Posterior vena cava (tissue), 2 donors: ENCODE measurements at regions of chr17 and their contacts with region 1.

Region 1: DNA sequence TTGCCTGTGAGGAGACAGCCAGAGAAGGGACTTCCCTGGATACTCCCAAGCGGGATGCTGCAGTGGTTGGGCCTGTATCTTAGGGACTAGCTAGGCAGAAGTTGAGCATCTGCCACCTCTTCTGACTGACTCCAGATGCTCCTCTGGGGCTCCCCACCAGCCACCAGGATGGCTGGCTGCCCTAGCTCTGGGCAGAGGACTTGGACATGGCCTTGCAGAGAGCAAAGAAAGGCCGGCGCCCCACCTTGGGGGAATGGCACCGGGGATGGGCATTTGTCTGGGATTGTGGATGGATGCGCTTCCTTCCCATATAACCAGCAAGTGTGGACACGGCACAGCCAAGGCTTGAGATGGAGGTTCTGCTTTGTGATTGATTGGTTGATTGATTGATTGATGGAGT is 69.0 kb downstream of the OR1D5 start:
- DNase-seq: peak; percentile 32

Region 2: DNA sequence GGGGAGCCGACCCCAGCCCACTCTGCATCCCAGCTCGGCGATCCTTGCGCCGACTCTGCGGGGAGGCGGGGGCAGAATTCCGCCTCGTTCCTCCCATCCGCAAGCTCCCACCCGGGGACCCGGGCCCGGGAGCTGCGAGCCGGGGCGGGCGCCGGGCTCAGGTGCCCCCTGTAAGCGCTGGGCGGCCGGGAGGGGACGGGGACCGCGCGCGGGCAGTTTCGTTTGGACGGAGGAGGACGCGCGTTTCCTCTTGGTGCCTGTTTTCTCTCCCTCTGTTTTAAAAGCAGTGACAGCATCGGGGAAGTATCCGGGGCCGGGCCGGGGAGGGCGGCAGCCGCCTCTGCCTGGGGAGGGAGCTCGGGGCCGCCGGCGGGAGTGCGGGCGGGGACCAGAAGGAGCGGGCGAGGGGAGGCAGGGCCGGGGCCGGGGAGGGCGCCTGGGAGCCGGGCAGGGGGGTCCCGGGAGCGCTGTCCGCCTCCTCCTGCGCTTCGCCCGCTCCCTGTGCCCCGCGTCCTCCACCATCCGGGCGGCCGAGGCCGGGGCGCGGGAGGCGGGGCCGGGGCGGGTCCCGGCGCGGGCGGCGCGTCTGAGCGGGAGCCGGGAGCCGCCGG is 141.2 kb before region 1 on chr17:
- intact Hi-C with region 1: loop called in 1 of 2 experiments (anchors 1 kb)
- DNase-seq: peak; percentile 89

Region 3: GRCh38 chr17:2929881-2930533 is 64.4 kb before region 1 on chr17:
- intact Hi-C with region 1: no loop called
- DNase-seq: no peak

Region 4: DNA sequence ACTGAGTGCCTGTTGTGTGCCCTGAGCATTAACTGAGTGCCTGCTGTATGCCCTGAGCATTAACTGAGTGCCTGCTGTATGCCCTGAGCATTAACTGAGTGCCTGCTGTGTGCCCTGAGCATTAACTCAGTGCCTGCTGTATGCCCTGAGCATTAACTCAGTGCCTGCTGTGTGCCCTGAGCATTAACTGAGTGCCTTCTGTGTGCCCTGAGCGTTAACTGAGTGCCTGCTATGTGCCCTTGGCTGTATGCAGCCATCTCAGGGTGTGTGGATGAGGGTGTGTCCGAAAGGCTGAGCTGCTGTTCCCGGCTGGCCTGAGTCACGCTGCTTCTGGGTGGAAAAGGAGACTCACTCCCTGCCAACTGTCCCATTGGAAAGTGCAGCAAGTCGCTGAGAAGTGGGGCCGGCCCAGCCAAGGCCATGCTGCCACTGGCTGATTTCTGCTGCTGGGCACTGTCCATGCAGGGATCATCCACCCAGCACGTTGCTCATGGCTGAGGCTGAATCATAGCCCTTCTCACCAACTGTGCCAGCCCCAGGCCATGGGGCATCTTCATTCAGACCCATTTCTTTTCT is 44.9 kb before region 1 on chr17:
- intact Hi-C with region 1: no loop called
- DNase-seq: peak; percentile 90

Region 5: DNA sequence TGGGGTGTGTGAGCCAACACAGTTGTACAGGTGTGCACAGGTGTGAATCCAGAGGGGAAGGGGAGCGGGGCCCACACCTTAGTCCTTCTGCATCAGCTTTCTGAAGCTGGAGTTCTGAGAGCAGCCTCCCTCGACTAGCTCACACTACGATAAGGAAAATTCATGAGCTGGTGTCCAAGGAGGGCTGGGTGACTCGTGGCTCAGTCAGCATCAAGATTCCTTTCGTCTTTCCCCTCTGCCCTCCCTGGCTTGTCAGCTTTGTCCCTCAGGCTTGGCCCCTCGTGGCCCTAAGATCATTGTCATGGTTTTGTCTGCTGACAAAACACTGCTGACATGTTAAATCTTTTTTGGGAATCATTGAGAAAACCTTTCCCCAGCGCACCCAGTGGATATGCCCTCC is 21.4 kb after region 1 on chr17:
- intact Hi-C with region 1: no loop called
- DNase-seq: no peak